WTC11 (cell line): ENCODE measurements at regions of chr11 and their contacts with region 1.

Region 1: DNA sequence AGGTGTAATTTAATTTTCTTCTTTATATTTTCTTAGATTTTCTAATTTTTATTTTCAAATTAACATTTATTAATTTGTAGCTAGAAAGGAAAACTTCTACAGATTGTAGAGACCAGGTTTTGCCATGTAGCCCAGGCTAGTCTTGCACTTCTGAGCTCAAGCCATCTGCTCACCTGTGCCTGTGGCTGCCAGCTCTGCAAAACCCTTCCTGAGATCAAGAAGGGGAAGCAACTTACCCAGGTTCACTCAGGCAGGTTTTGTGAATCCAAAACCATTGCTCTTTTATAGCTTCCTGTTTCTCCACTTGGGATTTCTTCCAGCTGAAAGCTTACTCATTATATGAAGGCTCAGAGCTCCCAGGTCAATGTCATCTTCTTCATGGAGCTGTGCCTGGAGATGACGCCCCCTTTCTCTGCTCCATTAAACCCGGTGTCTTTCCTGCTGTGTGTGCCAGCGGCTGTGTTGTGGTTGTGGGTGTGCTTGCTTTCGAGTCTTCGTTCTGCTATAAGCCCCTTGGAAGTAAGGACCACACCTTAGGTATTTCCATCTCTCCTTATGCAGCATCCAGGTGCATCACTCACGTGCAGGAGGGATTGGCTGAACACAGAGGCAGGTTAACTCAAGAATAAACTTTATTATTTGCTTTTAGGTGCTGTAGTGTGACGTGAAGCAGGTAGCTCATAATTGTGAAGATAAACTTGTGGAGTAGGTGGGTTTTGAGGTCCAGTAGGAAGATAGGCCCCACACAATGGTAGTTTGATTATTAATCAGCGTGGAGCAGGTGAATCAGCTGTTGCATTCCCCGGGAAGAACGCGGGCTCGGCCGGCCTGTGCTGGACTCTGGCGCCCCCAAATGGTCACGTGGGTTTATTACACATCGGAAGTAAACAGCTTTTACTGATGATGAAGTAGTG is 42.2 kb upstream of the INCENP start:
- DNase-seq: peak; percentile 89
- ATAC-seq: peak; percentile 89
- H3K4me3 Mint-ChIP-seq: no peak overlapping the region
- H3K27ac Mint-ChIP-seq: no peak overlapping the region
- H3K4me1 Mint-ChIP-seq: no peaks in the 10 kb centered on the region; the same call in 1 of the 2 replicates
- H3K27me3 Mint-ChIP-seq: no peaks in the 10 kb centered on the region; the same call in 1 of the 2 replicates
- CTCF ChIP-seq: peak; percentile 84

Region 2: DNA sequence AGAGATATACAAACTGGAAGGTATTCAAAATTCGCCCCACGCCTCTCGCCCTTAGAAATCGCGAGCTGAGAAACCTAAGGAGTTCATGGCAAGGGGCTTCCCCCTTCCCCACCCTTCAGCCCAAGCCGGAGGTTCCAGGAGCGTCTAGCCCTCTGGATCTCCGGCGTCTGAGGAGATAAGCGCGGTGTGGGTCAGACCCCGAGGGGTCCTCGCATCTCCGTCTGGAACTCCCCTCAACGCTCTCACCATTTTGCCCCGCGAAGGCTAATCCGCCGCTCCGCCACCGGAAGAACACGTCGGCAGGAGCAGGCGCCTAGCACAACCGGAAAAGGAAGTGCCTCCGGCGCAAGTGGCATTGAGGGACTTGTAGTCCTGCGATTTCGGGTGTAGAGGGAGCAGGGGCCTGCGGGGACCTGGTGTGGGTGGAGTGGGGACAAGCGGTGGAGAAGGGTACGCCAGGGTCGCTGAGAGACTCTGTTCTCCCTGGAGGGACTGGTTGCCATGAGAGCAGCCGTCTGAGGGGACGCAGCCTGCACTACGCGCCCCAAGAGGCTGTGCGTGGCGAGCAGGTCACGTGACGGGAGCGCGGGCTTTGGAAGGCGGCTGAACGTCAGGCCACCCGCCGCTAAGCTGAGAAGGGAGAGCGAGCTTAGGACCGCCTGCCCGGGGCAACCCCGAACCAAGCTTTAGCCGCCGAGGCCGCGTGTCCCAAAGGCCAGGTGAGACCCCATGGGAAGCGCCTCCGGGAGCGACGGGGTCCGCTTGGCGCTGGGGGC is 289.1 kb before region 1 on chr11 and contains the starts of genes FEN1 and TMEM258:
- CTCF ChIA-PET with region 1: interaction called, 19 read pairs
- POLR2A ChIA-PET with region 1: no interaction called
- DNase-seq: peak; percentile 88
- ATAC-seq: peak; percentile 77
- H3K4me3 Mint-ChIP-seq: peak within 1 kb of the TSS; percentile 94
- H3K27ac Mint-ChIP-seq: peak within 1 kb of the TSS; percentile 100
- H3K4me1 Mint-ChIP-seq: peaks cover 21% of the 10 kb centered on the region
- H3K27me3 Mint-ChIP-seq: no peaks in the 10 kb centered on the region; the same call in 1 of the 2 replicates
- CTCF ChIP-seq: no peak
- total RNA-seq, gene FEN1: 72.3 to 96.3 TPM (median 73.2 TPM) in 3 replicates
- total RNA-seq, gene TMEM258: 175 to 192 TPM (median 190 TPM) in 3 replicates

Region 3: DNA sequence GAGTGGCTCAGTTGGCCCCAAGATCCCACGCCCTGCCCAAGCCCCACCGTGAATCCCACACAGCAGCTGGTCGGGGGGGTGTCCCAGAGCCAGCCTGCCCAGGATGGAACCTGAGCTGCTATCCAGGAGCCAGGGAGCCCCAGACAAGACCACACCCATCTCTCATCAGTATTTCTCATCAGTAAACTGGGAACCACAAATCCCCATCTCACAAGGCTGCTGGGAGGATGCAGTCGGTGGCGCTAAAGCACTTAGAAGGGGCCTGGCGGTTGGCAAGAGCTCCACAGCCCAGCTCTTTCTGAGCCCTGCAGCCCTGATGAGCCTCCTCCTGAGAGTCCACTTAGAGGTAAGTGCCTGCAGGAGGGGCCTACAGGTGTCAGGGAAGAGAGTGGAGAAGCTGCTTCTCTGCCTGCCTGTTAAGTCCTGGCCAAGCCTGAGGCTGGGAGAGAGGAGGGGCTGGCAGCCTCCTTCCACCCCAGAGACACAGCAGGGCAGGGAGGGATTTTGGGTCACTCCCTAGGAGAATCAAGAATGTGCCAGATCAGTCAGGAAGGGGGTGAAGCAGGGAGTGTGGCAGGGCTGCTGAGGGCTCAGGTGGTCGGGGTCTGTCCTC is 196.4 kb before region 1 on chr11:
- CTCF ChIA-PET with region 1: interaction called, 32 read pairs
- POLR2A ChIA-PET with region 1: interaction called, 3 read pairs
- DNase-seq: no peak
- ATAC-seq: peak; percentile 27
- H3K4me3 Mint-ChIP-seq: no peak overlapping the region
- H3K27ac Mint-ChIP-seq: no peak overlapping the region
- H3K4me1 Mint-ChIP-seq: peaks cover 22% of the 10 kb centered on the region
- H3K27me3 Mint-ChIP-seq: 0 out of 2 replicates have a peak, but pooled peaks cover 4% of the 10 kb centered on the region
- CTCF ChIP-seq: no peak

Region 4: GRCh38 chr11:61947486-61948210 is 134.0 kb before region 1 on chr11:
- CTCF ChIA-PET with region 1: interaction called, 152 read pairs
- POLR2A ChIA-PET with region 1: interaction called, 4 read pairs
- DNase-seq: peak; percentile 89
- ATAC-seq: peak; percentile 93
- H3K4me3 Mint-ChIP-seq: no peak overlapping the region
- H3K27ac Mint-ChIP-seq: no peak overlapping the region
- H3K4me1 Mint-ChIP-seq: peaks cover 7% of the 10 kb centered on the region
- H3K27me3 Mint-ChIP-seq: peaks cover 3% of the 10 kb centered on the region
- CTCF ChIP-seq: peak; percentile 83

Region 5: GRCh38 chr11:61967116-61967923 is 114.3 kb before region 1 on chr11 and contains the start of gene FTH1:
- CTCF ChIA-PET with region 1: interaction called, 35 read pairs
- POLR2A ChIA-PET with region 1: interaction called, 8 read pairs
- DNase-seq: peak; percentile 85
- ATAC-seq: peak; percentile 76
- H3K4me3 Mint-ChIP-seq: peak within 1 kb of the TSS; percentile 94
- H3K27ac Mint-ChIP-seq: peak within 1 kb of the TSS; percentile 80
- H3K4me1 Mint-ChIP-seq: peaks cover 42% of the 10 kb centered on the region
- H3K27me3 Mint-ChIP-seq: no peaks in the 10 kb centered on the region; the same call in 1 of the 2 replicates
- CTCF ChIP-seq: no peak
- total RNA-seq, gene FTH1: 1,108 to 1,272 TPM (median 1,247 TPM) in 3 replicates

Region 6: DNA sequence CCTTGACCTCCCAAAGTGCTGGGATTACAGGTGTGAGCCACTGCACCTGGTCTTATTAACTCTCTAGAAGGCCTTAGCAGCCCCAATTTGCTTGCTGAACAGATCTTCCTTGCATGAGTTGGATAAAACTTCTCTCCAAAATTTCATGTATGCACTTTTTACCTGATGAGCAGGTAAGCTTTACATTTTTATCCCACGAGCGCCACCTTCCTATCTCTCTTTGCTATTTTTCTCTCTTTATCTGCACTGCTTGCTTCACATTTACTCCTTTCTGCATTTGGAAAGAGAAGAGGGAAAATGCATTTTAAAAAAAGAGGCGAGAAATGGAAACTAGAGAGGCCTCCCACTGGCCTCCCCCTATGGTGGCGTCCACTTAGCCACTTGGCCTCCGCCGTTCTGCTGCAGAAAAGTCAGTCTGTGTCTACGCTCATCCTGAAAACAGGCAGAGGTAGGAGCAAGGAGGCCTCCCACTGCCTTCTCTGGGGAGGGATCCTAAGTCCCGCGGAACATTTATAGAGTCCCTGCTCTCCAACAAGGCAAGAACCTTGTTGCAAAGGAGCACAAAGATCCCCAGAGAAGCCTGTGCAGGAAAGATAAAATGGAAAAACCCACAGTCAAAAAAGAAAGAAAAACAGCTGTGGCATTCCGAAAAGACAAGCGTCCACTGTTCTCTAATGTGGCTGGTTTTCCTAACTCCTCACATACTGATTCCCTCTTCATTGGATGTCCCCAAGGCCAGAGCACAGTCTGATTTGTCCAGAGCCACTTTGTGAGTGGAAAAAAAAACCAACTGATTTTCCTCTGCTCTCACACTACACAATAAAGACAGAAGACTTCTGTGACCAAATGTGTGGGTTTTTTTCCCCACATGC is 20.0 kb before region 1 on chr11:
- CTCF ChIA-PET with region 1: interaction called, 13 read pairs
- POLR2A ChIA-PET with region 1: no interaction called
- DNase-seq: no peak
- ATAC-seq: no peak
- H3K4me3 Mint-ChIP-seq: no peak overlapping the region
- H3K27ac Mint-ChIP-seq: peak overlapping the region; percentile 23; the same call in 1 of the 2 replicates
- H3K4me1 Mint-ChIP-seq: 0 out of 2 replicates have a peak, but pooled peaks cover 6% of the 10 kb centered on the region
- H3K27me3 Mint-ChIP-seq: no peaks in the 10 kb centered on the region; the same call in 1 of the 2 replicates
- CTCF ChIP-seq: no peak

Region 7: GRCh38 chr11:62123669-62124185 is 42.1 kb after region 1 on chr11 and contains the start of gene INCENP:
- CTCF ChIA-PET with region 1: interaction called, 12 read pairs
- POLR2A ChIA-PET with region 1: no interaction called
- DNase-seq: peak; percentile 95
- ATAC-seq: peak; percentile 98
- H3K4me3 Mint-ChIP-seq: peak within 1 kb of the TSS; percentile 97
- H3K27ac Mint-ChIP-seq: peak within 1 kb of the TSS; percentile 70
- H3K4me1 Mint-ChIP-seq: peaks cover 27% of the 10 kb centered on the region
- H3K27me3 Mint-ChIP-seq: no peaks in the 10 kb centered on the region
- CTCF ChIP-seq: no peak
- total RNA-seq, gene INCENP: 125 to 158 TPM (median 126 TPM) in 3 replicates

Region 8: DNA sequence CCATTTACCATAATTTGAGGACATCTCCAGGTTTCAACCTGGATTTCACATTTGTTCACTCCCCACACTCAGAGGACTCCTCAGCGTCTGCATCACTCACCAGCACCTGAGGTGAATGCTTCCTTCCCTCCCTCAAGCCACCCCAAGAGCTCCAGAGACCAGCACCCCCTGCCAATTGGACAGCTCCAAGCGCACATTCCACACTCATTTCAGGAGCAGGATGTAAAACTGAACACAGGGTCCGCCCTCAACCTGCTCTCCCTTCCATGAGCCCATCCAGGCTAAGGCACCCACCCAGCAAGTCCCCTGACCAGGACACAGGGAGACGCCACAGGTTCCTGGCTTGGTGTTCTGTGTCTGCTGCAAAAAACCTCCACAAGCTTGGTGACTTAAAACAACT is 112.3 kb after region 1 on chr11:
- CTCF ChIA-PET with region 1: no interaction called
- POLR2A ChIA-PET with region 1: no interaction called
- DNase-seq: peak; percentile 51
- ATAC-seq: peak; percentile 68
- H3K4me3 Mint-ChIP-seq: no peak overlapping the region
- H3K27ac Mint-ChIP-seq: no peak overlapping the region
- H3K4me1 Mint-ChIP-seq: peaks cover 15% of the 10 kb centered on the region
- H3K27me3 Mint-ChIP-seq: no peaks in the 10 kb centered on the region
- CTCF ChIP-seq: no peak